ENCODE measurements at regions of chr2 and their contacts with region 1.

Region 1: GRCh38 chr2:55718165-55719008 is 24.7 kb upstream of the PNPT1 start:
- DNase-seq: peak in 1 of 2 donors; percentile 54
- ATAC-seq: peak in 1 of 8 donors; percentile 54
- H3K4me3 ChIP-seq: no peak overlapping the region
- H3K27ac ChIP-seq: no peak overlapping the region
- H3K4me1 ChIP-seq: no peaks in the 10 kb centered on the region
- H3K27me3 ChIP-seq: peaks cover 0 to 13% (median 0%) of the 10 kb centered on the region in 7 donors
- CTCF ChIP-seq: peak; percentile 59 to 87 (median 85)

Region 2: GRCh38 chr2:57516698-57517340 is 1798.4 kb after region 1 on chr2:
- intact Hi-C with region 1: loop called in 5 of 10 experiments (anchors 5 to 10 kb)
- DNase-seq: no peak
- ATAC-seq: peak in 2 of 8 donors; percentile 50 to 55
- H3K4me3 ChIP-seq: no peak overlapping the region
- H3K27ac ChIP-seq: no peak overlapping the region
- H3K4me1 ChIP-seq: no peaks in the 10 kb centered on the region
- H3K27me3 ChIP-seq: no peaks in the 10 kb centered on the region
- CTCF ChIP-seq: peak; percentile 19 to 79 (median 63)